ENCODE measurements at regions of chr6 and their contacts with region 1.

Region 1: GRCh38 chr6:43247113-43247999 is 4.1 kb downstream of the TTBK1 start:
- DNase-seq: peak in 1 of 2 donors; percentile 88
- H3K4me3 ChIP-seq: peak overlapping the region; percentile 60 to 62
- H3K27ac ChIP-seq: no peak overlapping the region
- H3K4me1 ChIP-seq: peaks cover 3 to 6% of the 10 kb centered on the region in 2 donors
- H3K27me3 ChIP-seq: no peaks in the 10 kb centered on the region
- CTCF ChIP-seq: no peak

Region 2: DNA sequence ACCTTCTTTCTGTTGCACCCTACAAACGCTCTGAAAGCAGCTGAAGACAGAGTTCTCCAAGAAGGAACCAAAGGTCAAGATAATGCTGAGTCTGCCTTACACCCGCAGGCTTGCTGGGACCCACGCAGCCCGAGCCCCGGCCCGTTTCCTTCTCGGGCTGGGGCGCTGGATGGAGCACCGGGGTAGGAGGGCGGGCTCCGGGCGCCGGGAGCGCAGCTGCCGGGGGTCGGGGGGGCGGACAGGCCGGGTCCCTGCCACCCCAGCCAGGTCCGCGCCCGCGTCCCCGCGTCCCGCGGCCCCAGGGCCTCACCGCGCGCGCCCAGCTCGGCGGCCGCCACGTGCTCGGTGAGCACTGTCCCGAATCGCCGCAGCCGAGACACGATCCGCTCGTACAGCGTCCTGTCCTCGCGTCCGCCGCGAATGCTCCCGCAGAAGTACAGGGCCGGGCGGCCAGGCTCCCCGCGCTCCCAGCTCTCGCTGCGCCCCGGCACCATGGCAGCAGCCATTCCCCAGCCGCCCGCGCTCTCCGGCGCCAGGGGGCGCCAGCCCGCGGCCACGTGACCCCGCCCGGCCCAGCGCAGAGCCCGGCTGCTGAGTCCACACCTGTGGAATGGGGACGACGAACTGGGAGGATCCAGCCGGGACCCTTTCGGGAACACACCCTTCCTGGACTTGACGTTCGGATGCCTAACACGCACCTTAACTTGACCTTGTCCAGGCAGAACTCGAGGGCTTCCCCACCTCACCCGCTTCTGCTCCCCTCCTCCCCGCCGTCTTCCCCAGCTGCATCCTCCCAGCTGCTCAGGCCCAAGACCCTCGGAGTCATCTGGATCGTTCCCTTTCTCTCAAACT is 18.2 kb before region 1 on chr6 and contains the start of gene DNPH1:
- intact Hi-C with region 1: loop called (anchors 2 kb)
- DNase-seq: peak; percentile 25 to 84
- H3K4me3 ChIP-seq: peak within 1 kb of the TSS; percentile 74 to 78
- H3K27ac ChIP-seq: no peak within 1 kb of the TSS
- H3K4me1 ChIP-seq: peaks cover 3 to 6% of the 10 kb centered on the region in 2 donors
- H3K27me3 ChIP-seq: no peaks in the 10 kb centered on the region
- CTCF ChIP-seq: peak; percentile 57 to 93 (median 77)
- total RNA-seq, gene DNPH1: 39.1 TPM

Region 3: DNA sequence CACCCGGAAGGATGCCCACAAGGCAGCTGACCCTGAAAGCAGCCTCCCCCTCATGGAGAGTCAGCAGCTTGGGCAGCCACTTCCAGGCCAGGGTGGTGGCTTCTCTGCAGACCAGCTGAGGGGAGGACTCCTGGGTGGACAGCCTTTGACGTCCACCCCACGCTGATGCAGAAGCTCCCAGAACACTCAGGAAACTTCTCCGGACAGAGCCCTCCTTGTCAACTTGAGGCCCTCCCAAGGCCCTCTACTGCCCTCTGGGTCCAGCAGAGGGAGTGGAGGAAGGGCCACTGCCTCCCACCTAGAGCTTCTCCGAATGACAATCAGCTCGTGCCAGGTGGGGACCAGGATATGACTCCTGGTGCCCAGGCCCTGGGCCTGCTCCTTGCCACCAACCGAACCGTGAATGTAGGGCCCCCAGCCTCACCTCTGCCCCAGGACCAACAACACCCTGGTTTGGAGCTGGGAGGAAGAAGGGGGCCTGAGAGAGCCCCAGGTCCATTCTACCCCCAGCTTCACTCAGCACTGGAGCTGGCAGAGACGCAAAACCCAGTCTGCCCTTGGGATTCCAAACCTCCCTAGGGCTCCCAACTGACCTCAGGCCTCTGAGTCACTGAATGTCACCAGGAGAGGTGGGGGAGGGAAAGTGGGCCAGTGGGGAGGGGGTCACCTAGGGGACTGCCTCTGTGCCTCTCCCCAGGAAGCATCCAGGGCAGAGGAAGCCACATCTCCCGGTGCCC is 39.8 kb after region 1 on chr6:
- intact Hi-C with region 1: no loop called
- DNase-seq: no peak
- H3K4me3 ChIP-seq: no peak overlapping the region
- H3K27ac ChIP-seq: no peak overlapping the region
- H3K4me1 ChIP-seq: no peaks in the 10 kb centered on the region
- H3K27me3 ChIP-seq: no peaks in the 10 kb centered on the region
- CTCF ChIP-seq: no peak